ENCODE measurements at regions of chr12 and their contacts with region 1.

Region 1: DNA sequence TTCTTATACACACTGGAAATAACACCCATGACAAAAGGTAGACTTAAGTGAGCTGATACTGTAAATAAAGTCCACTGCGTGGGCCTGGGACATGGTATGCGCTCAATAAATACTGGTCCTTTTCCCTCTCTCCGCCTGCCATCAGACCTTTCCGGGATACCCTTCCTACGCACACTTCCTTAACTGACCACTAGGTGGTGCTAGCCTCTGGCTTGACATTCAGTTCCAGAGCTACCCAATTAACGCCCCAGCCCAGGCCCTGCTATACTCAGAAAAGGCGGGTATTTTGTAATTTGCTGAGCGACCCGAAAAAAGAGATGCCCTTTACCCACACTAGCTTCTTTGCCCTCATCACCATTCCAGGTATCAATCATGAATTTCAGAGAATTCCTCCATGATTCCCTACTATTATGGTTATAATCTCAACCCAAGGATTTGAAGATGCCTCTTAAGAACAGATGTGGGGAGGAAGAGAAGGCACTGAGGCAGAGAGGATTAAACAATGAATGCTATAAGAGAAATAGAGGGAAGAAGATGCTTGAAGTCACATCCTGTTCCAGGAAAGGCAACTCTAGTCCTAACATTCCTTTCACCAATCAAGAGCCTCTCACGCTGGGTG is 3.9 kb upstream of the LRP1 start:
- DNase-seq: peak; percentile 80 to 92
- H3K4me3 ChIP-seq: no peak overlapping the region
- H3K27ac ChIP-seq: peak overlapping the region in 1 of 5 donors; percentile 13
- H3K4me1 ChIP-seq: peaks cover 5 to 19% (median 16%) of the 10 kb centered on the region in 4 donors
- H3K27me3 ChIP-seq: peaks cover 0 to 11% (median 0%) of the 10 kb centered on the region in 3 donors
- CTCF ChIP-seq: peak in 6 of 7 experiments; percentile 49 to 99 (median 96)
- EP300 ChIP-seq: no peak
- POLR2A ChIP-seq: no peak

Region 2: DNA sequence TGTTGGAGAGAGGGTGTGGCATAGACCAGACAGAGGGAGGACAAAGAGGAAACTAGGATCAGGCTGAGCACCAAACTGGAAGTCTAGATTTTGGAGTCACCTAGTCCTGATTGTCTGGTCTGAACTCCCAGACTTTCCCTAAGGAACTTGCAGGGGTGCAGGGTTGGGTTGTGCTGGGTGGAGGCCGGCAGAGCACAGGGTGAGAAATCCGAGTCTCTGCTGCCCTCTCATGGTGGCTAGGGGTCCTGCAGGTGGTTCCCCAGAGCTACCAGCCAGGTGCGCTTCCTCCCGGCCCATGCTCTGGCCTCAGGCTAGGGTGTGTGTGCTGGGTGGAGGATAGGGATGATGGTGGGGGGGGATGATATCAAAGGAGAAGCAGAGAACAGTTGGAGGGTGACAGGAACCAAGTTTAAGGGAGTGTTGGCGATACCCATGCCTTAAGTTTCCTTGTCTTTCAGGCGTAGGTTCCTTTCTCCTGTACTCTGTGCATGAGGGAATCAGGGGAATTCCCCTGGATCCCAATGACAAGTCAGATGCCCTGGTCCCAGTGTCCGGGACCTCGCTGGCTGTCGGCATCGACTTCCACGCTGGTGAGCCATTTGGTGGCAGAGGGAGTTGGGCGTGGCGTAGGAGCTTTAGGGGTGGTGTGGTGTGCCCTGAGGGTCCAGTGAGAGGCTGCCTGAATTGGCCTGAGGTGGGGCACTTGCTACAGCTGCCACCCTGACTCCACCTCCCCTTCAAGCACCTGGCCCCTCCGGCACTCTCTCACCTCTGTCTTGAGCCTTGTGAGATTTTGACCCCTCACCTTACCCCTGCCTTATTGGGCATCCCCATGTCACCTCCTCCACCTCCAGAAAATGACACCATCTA is 58.8 kb after region 1 on chr12:
- intact Hi-C with region 1: loop called (anchors 2 kb)
- DNase-seq: peak; percentile 85 to 93
- H3K4me3 ChIP-seq: no peak overlapping the region
- H3K27ac ChIP-seq: no peak overlapping the region
- H3K4me1 ChIP-seq: no peaks in the 10 kb centered on the region
- H3K27me3 ChIP-seq: no peaks in the 10 kb centered on the region
- CTCF ChIP-seq: peak in 5 of 7 experiments; percentile 72 to 96 (median 90)
- EP300 ChIP-seq: no peak
- POLR2A ChIP-seq: no peak

Measured in stomach (tissue), 19 donors.